Activated CD8-positive, alpha-beta memory T cell treated with anti-CD3 and anti-CD28 coated beads, Interleukin-2, amount 10 ng/mL, durations not matched to agents 7 days and 5 days (primary cell): ENCODE measurements at regions of chr3 and their contacts with region 1.

Region 1: GRCh38 chr3:196528639-196529233 is 13.6 kb upstream of the SMCO1 start:
- DNase-seq: peak; percentile 85
- ATAC-seq: peak; percentile 98
- H3K4me3 Mint-ChIP-seq: peak overlapping the region; percentile 65
- H3K27ac Mint-ChIP-seq: peak overlapping the region; percentile 54
- H3K4me1 Mint-ChIP-seq: peaks cover 17% of the 10 kb centered on the region
- H3K27me3 Mint-ChIP-seq: peaks cover 16% of the 10 kb centered on the region

Region 2: DNA sequence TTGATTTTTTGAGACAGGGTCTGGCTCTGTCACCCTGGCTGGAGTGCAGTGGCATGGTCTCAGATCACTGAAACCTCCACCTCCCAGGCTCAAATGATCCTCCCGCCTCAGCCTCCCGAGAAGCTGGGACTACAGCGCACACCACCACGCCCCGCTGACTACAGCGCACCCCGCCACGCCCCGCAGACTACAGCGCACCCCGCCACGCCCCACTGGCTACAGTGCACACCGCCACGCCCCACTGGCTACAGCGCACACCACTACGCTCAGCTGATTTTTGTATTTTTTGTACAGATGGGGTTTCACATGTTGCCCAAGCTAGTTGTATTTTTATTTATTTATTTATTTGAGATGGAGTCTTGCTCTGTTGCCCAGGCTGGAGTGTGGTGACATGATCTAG is 276.8 kb before region 1 on chr3:
- CTCF ChIA-PET with region 1: interaction called, 12 read pairs
- DNase-seq: no peak
- ATAC-seq: no peak
- H3K4me3 Mint-ChIP-seq: no peak overlapping the region
- H3K27ac Mint-ChIP-seq: no peak overlapping the region
- H3K4me1 Mint-ChIP-seq: peaks cover 10% of the 10 kb centered on the region
- H3K27me3 Mint-ChIP-seq: no peaks in the 10 kb centered on the region

Region 3: DNA sequence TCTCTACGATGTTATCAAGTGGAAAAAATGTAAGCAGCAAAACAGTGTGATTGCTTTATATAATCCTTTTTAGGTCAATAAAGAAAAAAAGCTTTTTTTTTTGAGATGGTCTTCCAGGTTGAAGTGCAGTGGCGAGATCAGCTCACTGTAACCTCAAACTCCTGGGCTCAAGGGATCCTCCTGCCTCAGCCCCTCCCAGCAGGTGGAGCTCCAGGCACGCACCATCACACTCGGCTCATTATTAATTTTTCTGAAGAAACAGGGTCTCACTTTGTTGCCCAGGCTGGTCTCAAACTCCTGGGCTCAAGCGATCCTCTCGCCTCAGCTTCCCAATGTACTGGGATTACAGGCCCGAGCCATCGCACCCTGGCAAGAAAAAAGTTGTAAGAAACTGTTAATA is 42.5 kb before region 1 on chr3:
- CTCF ChIA-PET with region 1: interaction called, 19 read pairs
- DNase-seq: no peak
- ATAC-seq: no peak
- H3K4me3 Mint-ChIP-seq: no peak overlapping the region
- H3K27ac Mint-ChIP-seq: no peak overlapping the region
- H3K4me1 Mint-ChIP-seq: peaks cover 3% of the 10 kb centered on the region
- H3K27me3 Mint-ChIP-seq: no peaks in the 10 kb centered on the region

Region 4: DNA sequence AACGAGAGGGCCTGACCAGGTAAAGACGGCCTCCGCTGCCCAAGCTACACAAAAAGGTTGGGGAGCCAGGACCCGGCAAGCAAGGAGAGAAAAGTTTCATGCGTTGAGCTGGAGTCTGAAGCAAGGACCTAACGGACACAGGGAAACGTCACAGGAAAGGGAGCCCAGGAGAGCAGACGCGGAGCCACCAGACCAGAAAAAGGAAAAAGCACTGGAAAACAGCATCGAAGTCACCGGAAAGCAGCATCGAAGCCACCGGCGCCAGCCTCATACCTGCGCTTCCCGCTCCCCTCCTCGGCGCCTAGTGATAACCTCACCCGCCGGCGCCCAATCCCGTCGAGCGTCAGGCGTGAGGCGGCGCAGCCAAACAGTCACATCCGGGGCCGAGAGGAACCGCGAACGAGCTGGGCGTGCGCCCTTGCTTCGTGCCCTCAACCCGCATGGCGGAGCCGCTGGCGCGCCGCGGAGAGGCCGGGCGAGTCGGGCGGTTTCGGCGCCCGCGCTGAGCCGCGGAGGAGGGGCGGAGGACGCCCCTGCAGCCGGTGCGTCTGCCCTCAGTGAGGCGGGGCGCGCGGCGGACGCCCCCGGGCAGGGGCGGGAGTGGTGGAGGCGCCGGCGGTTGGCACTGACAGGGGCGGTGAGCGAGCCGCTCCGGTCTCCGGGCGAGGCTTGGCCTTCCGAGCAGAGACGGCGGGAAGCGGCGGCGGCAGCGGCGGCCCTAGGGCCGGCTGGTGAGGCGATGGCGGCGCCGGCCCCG is 39.7 kb after region 1 on chr3 and contains the starts of genes FBXO45 and WDR53:
- CTCF ChIA-PET with region 1: interaction called, 16 read pairs
- DNase-seq: peak; percentile 97
- ATAC-seq: peak; percentile 96
- H3K4me3 Mint-ChIP-seq: peak within 1 kb of the TSS; percentile 86
- H3K27ac Mint-ChIP-seq: peak within 1 kb of the TSS; percentile 98
- H3K4me1 Mint-ChIP-seq: peaks cover 50% of the 10 kb centered on the region
- H3K27me3 Mint-ChIP-seq: no peaks in the 10 kb centered on the region
- total RNA-seq, gene FBXO45: 14.9 to 20.3 TPM
- total RNA-seq, gene WDR53: 22.2 to 23.1 TPM

Region 5: GRCh38 chr3:196684548-196685407 is 156.0 kb after region 1 on chr3:
- CTCF ChIA-PET with region 1: interaction called, 23 read pairs
- DNase-seq: peak; percentile 83
- ATAC-seq: peak; percentile 87
- H3K4me3 Mint-ChIP-seq: peak overlapping the region; percentile 46
- H3K27ac Mint-ChIP-seq: peak overlapping the region; percentile 50
- H3K4me1 Mint-ChIP-seq: peaks cover 21% of the 10 kb centered on the region
- H3K27me3 Mint-ChIP-seq: no peaks in the 10 kb centered on the region